ENCODE measurements at regions of chr20 and their contacts with region 1.

Region 1: GRCh38 chr20:38242848-38243449 is 17.6 kb downstream of the KIAA1755 start:
- DNase-seq: peak in 1 of 2 experiments; percentile 84
- H3K4me3 ChIP-seq: no peak overlapping the region
- H3K27ac ChIP-seq: no peak overlapping the region
- H3K4me1 ChIP-seq: peaks cover 0 to 4% (median 0%) of the 10 kb centered on the region in 4 experiments; a peak in 1 of 7 replicates
- H3K27me3 ChIP-seq: 0 out of 7 replicates have a peak, but pooled peaks cover 0 to 2% (median 0%) of the 10 kb centered on the region in 4 experiments
- CTCF ChIP-seq: peak; percentile 75 to 88 (median 87)
- EP300 ChIP-seq: no peak
- POLR2A ChIP-seq: no peak
- RAD21 ChIP-seq: peak; percentile 52 to 65

Region 2: DNA sequence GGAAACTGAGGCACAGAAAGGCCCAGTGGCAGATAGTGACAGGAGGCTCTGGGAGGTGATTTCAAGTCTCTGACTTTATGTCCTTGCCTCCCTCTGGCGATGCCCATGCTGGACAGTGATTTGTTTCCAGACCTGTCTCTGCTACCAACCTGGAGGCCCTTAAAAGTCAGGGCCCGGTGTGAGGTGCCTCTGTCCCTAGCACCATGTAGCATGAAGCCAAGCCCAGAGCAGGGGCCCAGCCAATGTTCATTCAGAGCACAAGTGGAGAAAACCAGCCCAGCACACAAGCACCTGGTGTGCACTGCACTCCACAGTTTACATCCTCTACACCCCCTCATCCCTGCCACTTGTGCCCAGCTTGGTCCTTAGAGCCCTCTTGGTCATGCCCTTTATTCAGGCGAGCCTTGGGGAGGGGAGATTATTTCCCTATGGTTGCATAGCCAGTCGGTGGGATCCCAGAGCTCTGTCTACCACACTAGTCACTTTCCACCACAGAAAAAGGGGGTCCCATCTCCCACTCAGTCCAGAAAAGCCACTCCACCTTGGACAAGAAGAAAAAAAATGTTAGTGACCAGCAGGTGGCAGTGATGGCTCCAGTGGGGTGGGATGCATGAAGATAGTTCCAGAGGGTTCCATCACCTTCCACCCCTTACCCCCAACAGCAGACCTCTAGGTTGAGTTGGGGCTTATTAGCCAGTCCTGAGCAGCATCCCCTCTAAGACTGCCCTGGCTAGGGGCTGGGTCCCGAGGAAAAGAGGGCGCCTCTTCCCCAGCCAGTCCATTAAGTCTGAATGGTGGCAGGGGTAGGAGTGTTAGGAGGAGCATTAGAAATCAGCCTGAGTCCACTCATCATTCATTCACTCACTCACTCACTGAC is 13.3 kb before region 1 on chr20:
- CTCF ChIA-PET with region 1: interaction called, 29 read pairs
- POLR2A ChIA-PET with region 1: no interaction called
- DNase-seq: peak in 1 of 2 experiments; percentile 53
- H3K4me3 ChIP-seq: no peak overlapping the region
- H3K27ac ChIP-seq: no peak overlapping the region
- H3K4me1 ChIP-seq: no peaks in the 10 kb centered on the region
- H3K27me3 ChIP-seq: no peaks in the 10 kb centered on the region
- CTCF ChIP-seq: peak; percentile 50 to 54 (median 51)
- EP300 ChIP-seq: no peak
- POLR2A ChIP-seq: no peak
- RAD21 ChIP-seq: peak; percentile 43 to 57

Region 3: GRCh38 chr20:38286586-38287531 is 43.9 kb after region 1 on chr20:
- CTCF ChIA-PET with region 1: no interaction called
- POLR2A ChIA-PET with region 1: no interaction called
- DNase-seq: no peak
- H3K4me3 ChIP-seq: no peak overlapping the region
- H3K27ac ChIP-seq: no peak overlapping the region
- H3K4me1 ChIP-seq: peaks cover 0 to 4% (median 1%) of the 10 kb centered on the region in 4 experiments; a peak in 2 of 7 replicates
- H3K27me3 ChIP-seq: no peaks in the 10 kb centered on the region; a peak in 1 of 7 replicates
- CTCF ChIP-seq: no peak
- EP300 ChIP-seq: no peak
- POLR2A ChIP-seq: no peak
- RAD21 ChIP-seq: no peak

Measured in H1 (cell line).